SK-MEL-5 (cell line): ENCODE measurements at regions of chr7 and their contacts with region 1.

Region 1: DNA sequence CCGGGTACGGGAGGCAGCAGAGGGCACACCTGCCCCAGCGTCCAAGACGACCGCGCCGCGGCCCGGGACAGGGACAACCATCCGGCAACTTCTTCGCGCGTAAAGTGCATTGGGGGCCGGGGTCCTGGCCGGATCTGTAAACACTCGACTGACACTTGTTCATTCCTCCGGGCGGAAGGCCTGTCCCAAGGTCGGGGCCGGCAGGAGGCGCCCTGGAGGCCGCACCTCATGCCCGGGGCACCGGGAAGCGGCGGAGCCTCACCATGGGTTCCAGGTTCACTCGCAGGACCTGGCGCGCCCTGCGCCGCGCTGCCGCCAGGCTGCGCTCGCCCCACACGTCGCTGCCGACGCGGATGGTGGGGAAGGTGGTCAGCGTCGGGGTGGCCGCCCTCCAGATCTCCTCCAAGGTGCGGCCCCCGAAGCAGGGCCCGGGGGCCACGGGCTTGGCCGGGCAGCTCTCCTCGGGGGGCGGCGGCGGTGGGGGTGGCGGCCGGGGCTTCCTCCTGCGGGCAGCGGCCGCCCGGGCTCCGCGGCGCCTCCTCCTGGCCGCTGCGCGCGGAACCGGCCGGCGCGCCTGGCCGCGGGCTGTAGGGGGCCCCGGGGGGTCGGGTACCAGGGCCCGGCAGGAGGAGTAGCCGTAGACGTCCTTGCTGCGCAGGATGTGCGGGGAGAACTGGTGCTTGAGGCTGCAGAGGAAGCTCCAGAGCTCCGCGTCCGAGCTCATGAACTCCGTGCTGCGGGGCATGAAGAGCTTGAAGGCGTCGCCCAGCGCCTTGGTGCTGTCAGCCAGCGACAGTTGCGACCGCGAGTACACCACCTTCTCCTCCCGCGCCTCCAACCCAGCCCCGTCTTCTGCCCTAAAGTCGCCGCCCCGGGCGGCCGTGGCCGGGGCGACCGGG is 746 bp downstream of the CCDC71L start:
- DNase-seq: peak; percentile 94

Region 2: GRCh38 chr7:106377847-106378361 is 282.3 kb before region 1 on chr7:
- in situ Hi-C with region 1: no loop called
- DNase-seq: no peak

Region 3: DNA sequence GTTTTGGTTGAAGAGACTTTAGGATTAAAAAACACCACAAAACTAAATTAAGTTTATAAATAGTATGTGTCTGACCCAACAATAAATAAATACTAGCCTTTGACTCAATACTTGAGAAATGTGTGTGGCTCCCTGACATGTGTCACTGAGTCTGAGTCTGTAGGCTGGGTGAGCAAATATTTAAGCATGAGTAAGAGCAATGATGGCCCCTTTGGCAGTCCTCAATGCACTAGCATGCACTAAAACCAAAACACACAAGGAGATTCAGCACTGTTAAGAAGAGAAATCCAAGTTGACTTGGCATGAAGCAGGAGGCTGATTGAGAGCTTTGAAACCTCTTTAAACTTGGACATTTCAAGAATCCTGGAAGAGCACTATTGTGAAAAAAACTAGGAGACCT is 36.4 kb before region 1 on chr7:
- in situ Hi-C with region 1: loop called (anchors 5 kb)
- DNase-seq: no peak

Region 4: DNA sequence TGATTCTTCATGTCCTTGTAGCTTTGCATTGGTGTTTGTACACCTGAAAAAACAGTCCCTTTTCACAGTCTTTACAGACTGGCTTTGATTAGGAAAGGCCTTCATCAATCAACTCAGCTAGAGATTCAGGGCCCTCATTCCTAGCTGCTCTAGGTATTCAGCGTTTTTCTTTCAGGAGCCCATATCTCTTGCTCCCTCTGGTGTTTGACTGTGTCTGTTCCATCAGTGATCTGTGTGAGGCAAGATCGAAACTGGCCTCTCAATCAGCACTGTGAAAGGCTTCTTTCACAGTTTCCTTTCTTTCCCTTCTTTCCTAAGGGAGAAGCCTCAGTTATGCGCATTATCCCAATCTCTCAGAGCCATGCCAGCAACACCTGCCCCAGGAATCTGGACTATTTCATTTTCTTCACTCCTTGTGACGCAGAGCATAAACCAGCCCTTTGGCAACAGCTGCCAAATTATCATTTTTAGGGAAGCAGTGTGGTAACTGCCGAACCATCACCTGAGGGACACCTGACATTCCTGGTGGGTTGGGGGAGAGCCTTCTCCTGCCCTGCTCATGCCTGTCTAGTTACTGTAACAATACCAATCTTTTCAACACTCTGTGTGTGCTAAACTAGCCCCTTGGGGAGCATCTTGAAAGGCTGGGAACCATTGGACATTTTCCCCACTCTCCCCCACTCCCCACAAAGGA is 76.4 kb after region 1 on chr7:
- in situ Hi-C with region 1: loop called (anchors 10 kb)
- DNase-seq: peak; percentile 98